ENCODE measurements at regions of chr7 and their contacts with region 1.

Region 1: DNA sequence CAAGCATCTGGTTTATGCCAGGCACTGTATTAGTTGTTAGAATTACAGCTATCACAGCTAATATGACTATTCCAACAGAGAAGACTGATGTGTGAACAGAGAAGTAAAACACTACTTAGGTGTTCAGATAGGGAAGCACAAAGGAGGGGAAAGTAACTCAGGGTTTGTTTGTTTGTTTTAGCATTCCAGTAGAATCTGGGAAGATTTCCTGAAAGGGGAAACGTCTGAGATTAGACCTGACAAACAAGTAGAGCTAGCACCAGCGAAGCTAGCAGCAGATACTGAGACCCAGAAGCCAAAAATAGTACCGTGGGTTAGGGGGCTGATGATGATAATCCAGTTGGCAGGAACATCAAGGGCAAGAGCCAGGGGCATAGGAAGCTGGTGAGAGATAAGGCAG is 28.8 kb upstream of the KLHL7 start:
- DNase-seq: no peak
- ATAC-seq: no peak
- H3K4me3 ChIP-seq: no peak overlapping the region
- H3K4me3 Mint-ChIP-seq: no peak overlapping the region
- H3K27ac ChIP-seq: no peak overlapping the region
- H3K27ac Mint-ChIP-seq: no peak overlapping the region
- H3K4me1 ChIP-seq: no peaks in the 10 kb centered on the region
- H3K4me1 Mint-ChIP-seq: no peaks in the 10 kb centered on the region
- H3K27me3 ChIP-seq: peaks cover 0 to 6% of the 10 kb centered on the region in 2 experiments
- H3K27me3 Mint-ChIP-seq: peaks cover 5% of the 10 kb centered on the region
- CTCF ChIP-seq: no peak

Region 2: DNA sequence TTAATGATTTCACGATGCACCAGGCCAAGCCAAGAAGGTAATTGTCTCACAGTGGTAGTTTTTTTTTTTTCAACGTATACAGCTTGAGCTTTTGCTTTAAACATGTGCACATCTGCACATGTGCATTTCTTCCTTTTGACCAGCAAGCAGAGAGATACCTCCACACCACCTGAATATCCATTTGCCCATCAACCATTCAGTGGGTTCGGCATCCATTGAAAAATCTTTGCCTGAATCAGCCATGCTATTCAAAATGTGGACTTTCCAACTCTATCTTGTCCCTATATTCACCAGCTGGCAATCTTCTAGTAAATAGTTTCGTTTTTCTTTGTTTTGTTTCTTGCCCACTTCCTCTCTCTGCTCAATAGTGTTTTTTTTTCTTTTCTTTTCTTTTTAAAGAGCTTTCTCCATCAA is 462.7 kb after region 1 on chr7:
- CTCF ChIA-PET with region 1: no interaction called
- POLR2A ChIA-PET with region 1: no interaction called
- intact Hi-C with region 1: loop called in 1 of 2 experiments (anchors 5 kb)
- DNase-seq: peak in 1 of 14 experiments; percentile 68
- ATAC-seq: peak; percentile 71
- H3K4me3 ChIP-seq: peak overlapping the region; percentile 26
- H3K4me3 Mint-ChIP-seq: peak overlapping the region; percentile 54
- H3K27ac ChIP-seq: peak overlapping the region; percentile 35 to 63
- H3K27ac Mint-ChIP-seq: peak overlapping the region; percentile 63
- H3K4me1 ChIP-seq: peaks cover 16% of the 10 kb centered on the region
- H3K4me1 Mint-ChIP-seq: peaks cover 17% of the 10 kb centered on the region
- H3K27me3 ChIP-seq: no peaks in the 10 kb centered on the region
- H3K27me3 Mint-ChIP-seq: no peaks in the 10 kb centered on the region
- CTCF ChIP-seq: no peak

Measured in CD4-positive, alpha-beta T cell (primary cell).